Activated CD8-positive, alpha-beta T cell treated with anti-CD3 and anti-CD28 coated beads for 36 hours (primary cell): ENCODE measurements at regions of chr15 and their contacts with region 1.

Region 1: GRCh38 chr15:34587717-34588674 is 4.5 kb upstream of the GOLGA8B start:
- DNase-seq: peak; percentile 77
- ATAC-seq: peak; percentile 69
- H3K4me3 Mint-ChIP-seq: peak overlapping the region; percentile 79
- H3K27ac Mint-ChIP-seq: peak overlapping the region; percentile 76
- H3K4me1 Mint-ChIP-seq: peaks cover 10% of the 10 kb centered on the region
- H3K27me3 Mint-ChIP-seq: peaks cover 23% of the 10 kb centered on the region
- CTCF ChIP-seq: peak; percentile 93

Region 2: GRCh38 chr15:34065941-34066340 is 522.1 kb before region 1 on chr15:
- CTCF ChIA-PET with region 1: interaction called, 3 read pairs
- POLR2A ChIA-PET with region 1: no interaction called
- intact Hi-C with region 1: loop called (anchors 10 kb)
- DNase-seq: no peak
- ATAC-seq: no peak
- H3K4me3 Mint-ChIP-seq: no peak overlapping the region
- H3K27ac Mint-ChIP-seq: no peak overlapping the region
- H3K4me1 Mint-ChIP-seq: peaks cover 3% of the 10 kb centered on the region
- H3K27me3 Mint-ChIP-seq: no peaks in the 10 kb centered on the region
- CTCF ChIP-seq: no peak

Region 3: DNA sequence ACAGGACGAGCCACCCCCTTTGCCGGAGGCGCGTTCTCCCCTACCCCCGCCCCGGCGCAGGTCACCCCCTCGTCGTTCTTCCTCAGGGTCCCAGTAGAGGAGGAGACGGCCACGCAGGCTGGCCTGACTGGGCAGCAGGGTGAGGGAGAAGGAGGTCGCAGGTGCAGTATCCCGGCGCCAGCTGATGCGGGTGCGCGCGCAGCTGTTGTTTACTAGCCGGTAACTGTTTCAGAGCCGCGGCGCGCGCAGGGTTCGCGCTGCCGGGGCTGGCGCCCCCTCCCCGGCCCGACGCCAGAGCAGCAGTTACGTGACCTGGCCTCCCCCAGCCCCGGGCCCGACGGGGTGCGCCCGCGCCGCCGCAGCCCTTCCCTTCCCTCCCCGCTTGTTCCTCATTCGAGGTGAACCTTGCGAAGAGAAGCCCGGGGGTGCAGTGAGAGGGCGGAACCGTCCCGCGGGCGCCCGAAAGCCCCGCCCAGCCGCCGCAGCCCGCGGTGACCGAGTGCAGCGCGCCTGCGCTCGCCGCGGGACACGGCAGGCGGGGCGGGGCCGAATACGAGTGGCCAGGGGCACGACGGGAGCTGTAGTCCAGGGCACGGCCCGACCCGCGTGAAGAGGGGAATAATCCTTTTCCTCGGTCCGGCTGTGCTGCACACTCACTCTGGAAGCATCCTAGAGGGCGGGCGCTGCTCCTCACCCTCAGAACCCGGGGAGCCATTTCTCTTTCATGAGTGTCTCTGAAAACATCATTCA is 250.3 kb before region 1 on chr15 and contains the start of gene SLC12A6:
- CTCF ChIA-PET with region 1: interaction called, 6 read pairs
- POLR2A ChIA-PET with region 1: no interaction called
- intact Hi-C with region 1: loop called (anchors 10 kb)
- DNase-seq: peak; percentile 91
- ATAC-seq: peak; percentile 85
- H3K4me3 Mint-ChIP-seq: peak within 1 kb of the TSS; percentile 99
- H3K27ac Mint-ChIP-seq: peak within 1 kb of the TSS; percentile 95
- H3K4me1 Mint-ChIP-seq: peaks cover 49% of the 10 kb centered on the region
- H3K27me3 Mint-ChIP-seq: no peaks in the 10 kb centered on the region
- CTCF ChIP-seq: no peak
- total RNA-seq, gene SLC12A6: 22.2 to 24.8 TPM

Region 4: DNA sequence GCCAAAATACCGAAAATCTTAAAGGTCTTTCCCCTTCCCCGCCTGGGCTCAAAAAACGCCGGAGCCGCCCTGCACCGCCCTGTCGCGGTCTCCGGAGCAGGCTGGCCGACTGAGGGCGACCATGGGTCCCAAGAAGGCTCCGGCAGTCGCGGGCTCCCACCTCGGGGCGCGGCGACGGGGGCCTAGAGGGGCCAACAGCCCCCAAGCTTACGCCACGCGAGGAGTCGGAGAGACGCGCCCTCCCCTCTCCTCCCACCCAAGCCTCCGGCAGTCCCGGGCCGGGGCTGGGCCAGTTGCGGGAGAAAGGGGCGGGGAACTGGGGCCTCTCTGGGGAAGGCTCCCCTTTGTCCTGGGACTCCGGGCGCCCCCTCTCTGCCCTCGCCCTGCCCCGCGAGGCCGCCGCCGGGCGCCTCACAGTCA is 73.7 kb before region 1 on chr15:
- CTCF ChIA-PET with region 1: interaction called, 21 read pairs
- POLR2A ChIA-PET with region 1: no interaction called
- intact Hi-C with region 1: no loop called
- DNase-seq: peak; percentile 40
- ATAC-seq: peak; percentile 59
- H3K4me3 Mint-ChIP-seq: peak overlapping the region; percentile 76
- H3K27ac Mint-ChIP-seq: no peak overlapping the region
- H3K4me1 Mint-ChIP-seq: peaks cover 19% of the 10 kb centered on the region
- H3K27me3 Mint-ChIP-seq: peaks cover 50% of the 10 kb centered on the region
- CTCF ChIP-seq: no peak